Activated naive CD4-positive, alpha-beta T cell treated with anti-CD3 and anti-CD28 coated beads for 36 hours (primary cell): ENCODE measurements at regions of chr13 and their contacts with region 1.

Region 1: DNA sequence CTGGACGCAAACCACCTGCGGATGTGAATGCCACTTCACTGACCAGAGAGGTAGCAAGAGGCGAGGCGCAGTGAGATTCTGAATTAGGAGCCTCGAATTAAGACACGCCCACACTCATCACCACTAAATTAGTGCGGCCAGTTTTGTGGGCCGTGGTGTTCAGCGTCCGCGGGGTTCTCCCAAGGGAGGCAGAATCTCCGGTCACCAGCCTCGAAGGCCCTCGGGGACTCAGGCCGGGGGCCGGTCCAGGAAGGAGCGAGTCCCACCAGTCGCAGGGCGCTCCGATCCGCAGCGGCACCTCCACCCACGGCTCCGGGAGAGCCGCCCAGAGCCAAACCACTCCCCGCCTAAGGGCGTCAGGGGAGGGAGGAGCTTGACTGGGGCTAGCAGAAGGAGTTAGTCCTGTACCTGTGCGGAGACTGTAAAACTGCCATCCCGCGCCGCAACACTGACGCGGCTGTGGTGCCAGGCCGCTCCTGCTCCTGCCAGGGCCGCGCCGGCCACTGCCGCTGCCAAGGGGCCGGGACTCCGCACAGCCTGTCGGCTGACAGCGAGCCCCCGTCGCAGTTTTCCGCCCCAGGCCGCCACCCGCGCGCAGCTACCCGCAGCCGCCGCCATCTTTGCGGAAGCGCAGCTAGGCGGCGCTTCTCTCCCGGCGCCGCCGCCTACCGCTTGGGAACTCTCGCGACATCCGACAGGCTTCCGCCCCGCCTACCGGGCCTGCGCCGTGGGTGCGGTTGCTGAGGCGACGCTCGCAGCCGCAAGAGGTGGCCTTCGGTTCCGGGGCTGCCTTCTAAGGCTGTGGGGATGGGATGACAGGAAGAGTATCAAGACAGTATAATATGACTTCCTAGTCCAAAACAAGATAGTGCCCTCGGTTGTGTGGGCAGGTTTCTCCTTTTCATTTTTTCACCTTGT is at the start of gene MICU2:
- DNase-seq: peak; percentile 97
- H3K4me3 Mint-ChIP-seq: peak within 1 kb of the TSS; percentile 84
- H3K27ac Mint-ChIP-seq: peak within 1 kb of the TSS; percentile 90
- H3K4me1 Mint-ChIP-seq: peaks cover 28% of the 10 kb centered on the region
- H3K27me3 Mint-ChIP-seq: peaks cover 3% of the 10 kb centered on the region
- total RNA-seq, gene MICU2: 27.5 to 28.2 TPM

Region 2: DNA sequence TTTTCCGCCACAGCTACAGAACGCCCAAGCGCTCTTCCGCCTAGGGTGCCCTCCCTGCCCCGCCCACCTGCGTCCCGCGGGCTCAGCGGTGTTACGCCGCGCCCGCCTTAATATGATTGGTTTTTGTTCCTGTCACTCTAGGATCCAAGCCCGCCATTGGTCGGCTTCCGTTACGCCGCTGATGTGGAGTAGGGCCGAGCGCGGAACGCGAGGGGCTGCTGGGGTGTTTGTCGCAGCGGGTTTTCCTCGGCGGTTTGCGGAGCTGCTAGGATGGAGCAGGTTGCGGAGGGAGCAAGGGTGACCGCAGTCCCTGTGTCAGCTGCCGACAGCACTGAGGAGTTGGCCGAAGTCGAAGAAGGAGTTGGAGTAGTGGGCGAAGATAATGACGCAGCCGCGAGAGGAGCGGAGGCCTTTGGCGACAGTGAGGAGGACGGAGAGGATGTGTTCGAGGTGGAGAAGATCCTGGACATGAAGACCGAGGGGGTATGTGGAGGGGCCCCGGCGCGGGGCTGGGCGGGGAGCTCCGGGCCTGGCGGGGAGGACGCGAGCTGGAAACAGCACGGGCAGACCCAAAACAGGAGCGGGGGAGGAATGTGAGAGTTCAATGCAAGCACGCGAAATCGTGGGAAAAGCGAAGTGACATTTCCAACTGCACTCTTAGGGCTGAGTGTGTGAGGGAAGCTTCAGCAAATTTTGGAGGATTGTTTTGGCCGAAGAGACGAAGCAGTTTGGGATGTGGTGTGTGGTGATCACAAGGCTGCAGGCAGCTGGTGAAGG is 1970.1 kb before region 1 on chr13 and contains the start of gene MPHOSPH8:
- CTCF ChIA-PET with region 1: no interaction called
- intact Hi-C with region 1: loop called (anchors 5 kb)
- DNase-seq: peak; percentile 94
- H3K4me3 Mint-ChIP-seq: peak within 1 kb of the TSS; percentile 100
- H3K27ac Mint-ChIP-seq: peak within 1 kb of the TSS; percentile 98
- H3K4me1 Mint-ChIP-seq: peaks cover 32% of the 10 kb centered on the region
- H3K27me3 Mint-ChIP-seq: no peaks in the 10 kb centered on the region
- total RNA-seq, gene MPHOSPH8: 20.6 to 21.5 TPM

Region 3: GRCh38 chr13:20902438-20903163 is 701.2 kb before region 1 on chr13 and contains the start of gene XPO4:
- CTCF ChIA-PET with region 1: no interaction called
- intact Hi-C with region 1: loop called (anchors 5 kb)
- DNase-seq: peak; percentile 83
- H3K4me3 Mint-ChIP-seq: peak within 1 kb of the TSS; percentile 95
- H3K27ac Mint-ChIP-seq: peak within 1 kb of the TSS; percentile 95
- H3K4me1 Mint-ChIP-seq: peaks cover 29% of the 10 kb centered on the region
- H3K27me3 Mint-ChIP-seq: no peaks in the 10 kb centered on the region
- total RNA-seq, gene XPO4: 20.4 to 21.2 TPM

Region 4: GRCh38 chr13:21458813-21459701 is 144.7 kb before region 1 on chr13 and contains the start of gene ZDHHC20:
- CTCF ChIA-PET with region 1: no interaction called
- intact Hi-C with region 1: loop called (anchors 1 kb)
- DNase-seq: peak; percentile 89
- H3K4me3 Mint-ChIP-seq: peak within 1 kb of the TSS; percentile 92
- H3K27ac Mint-ChIP-seq: peak within 1 kb of the TSS; percentile 88
- H3K4me1 Mint-ChIP-seq: peaks cover 29% of the 10 kb centered on the region
- H3K27me3 Mint-ChIP-seq: no peaks in the 10 kb centered on the region
- total RNA-seq, gene ZDHHC20: 48.0 to 50.7 TPM

Region 5: DNA sequence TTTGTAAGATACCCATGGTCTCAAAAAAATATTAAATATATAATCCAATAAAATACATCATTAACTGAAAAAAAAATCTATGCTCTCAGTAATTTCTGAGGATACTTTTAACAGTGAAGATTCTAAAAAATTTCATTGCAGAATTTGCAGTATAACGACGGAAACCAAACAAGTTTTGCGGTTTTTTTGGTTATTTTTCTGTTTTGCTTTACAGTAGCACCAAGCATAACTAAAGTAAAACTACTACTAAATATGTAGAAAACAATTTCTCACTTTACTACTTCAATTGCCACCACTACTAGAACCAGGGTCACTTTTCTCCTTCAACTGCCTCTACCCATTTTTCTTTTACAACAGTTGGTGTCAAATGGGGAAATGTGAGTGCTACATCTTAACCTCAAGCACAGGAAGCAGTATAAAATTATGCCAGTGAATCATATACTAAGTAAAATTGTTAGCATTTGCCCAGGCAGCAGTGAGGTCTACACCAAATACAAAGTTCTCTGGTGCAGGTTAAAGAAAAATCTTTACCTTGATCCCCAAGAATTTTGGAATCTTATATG is 24.0 kb before region 1 on chr13:
- CTCF ChIA-PET with region 1: no interaction called
- intact Hi-C with region 1: loop called (anchors 1 kb)
- DNase-seq: no peak
- H3K4me3 Mint-ChIP-seq: no peak overlapping the region
- H3K27ac Mint-ChIP-seq: peak overlapping the region; percentile 41
- H3K4me1 Mint-ChIP-seq: peaks cover 40% of the 10 kb centered on the region
- H3K27me3 Mint-ChIP-seq: no peaks in the 10 kb centered on the region

Region 6: GRCh38 chr13:21670883-21671619 is 67.3 kb after region 1 on chr13 and contains the start of gene FGF9:
- CTCF ChIA-PET with region 1: no interaction called
- intact Hi-C with region 1: loop called (anchors 1 kb)
- DNase-seq: peak; percentile 79
- H3K4me3 Mint-ChIP-seq: peak within 1 kb of the TSS; percentile 80
- H3K27ac Mint-ChIP-seq: no peak within 1 kb of the TSS
- H3K4me1 Mint-ChIP-seq: peaks cover 34% of the 10 kb centered on the region
- H3K27me3 Mint-ChIP-seq: peaks cover 32% of the 10 kb centered on the region
- total RNA-seq, gene FGF9: not detected

Region 7: GRCh38 chr13:21785989-21786388 is 182.2 kb after region 1 on chr13:
- CTCF ChIA-PET with region 1: no interaction called
- intact Hi-C with region 1: no loop called
- DNase-seq: no peak
- H3K4me3 Mint-ChIP-seq: no peak overlapping the region
- H3K27ac Mint-ChIP-seq: no peak overlapping the region
- H3K4me1 Mint-ChIP-seq: no peaks in the 10 kb centered on the region
- H3K27me3 Mint-ChIP-seq: peaks cover 6% of the 10 kb centered on the region